GM12878 (cell line): ENCODE measurements at regions of chr19 and their contacts with region 1.

Region 1: DNA sequence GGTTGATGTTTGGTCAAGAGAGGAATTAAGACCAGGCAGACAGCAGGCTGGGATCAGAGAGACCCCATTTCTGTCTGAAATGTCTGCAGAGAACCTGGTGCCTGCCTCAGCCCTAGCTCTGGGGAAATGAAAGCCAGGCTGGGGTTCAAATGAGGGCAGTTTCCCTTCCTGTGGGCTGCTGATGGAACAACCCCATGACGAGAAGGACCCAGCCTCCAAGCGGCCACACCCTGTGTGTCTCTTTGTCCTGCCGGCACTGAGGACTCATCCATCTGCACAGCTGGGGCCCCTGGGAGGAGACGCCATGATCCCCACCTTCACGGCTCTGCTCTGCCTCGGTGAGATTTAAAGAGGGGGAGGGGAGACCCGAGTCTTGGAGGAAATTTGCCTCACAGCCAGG is at the start of gene LILRB4:
- DNase-seq: no peak
- ATAC-seq: peak; percentile 79
- H3K4me3 ChIP-seq: peak within 1 kb of the TSS; percentile 49
- H3K27ac ChIP-seq: peak within 1 kb of the TSS; percentile 57
- H3K4me1 ChIP-seq: peaks cover 34% of the 10 kb centered on the region
- H3K27me3 ChIP-seq: no peaks in the 10 kb centered on the region
- CTCF ChIP-seq: no peak
- EP300 ChIP-seq: no peak
- POLR2A ChIP-seq: no peak; the same call in 1 of the 2 replicates
- RAD21 ChIP-seq: no peak
- polyA plus RNA-seq, gene LILRB4: 2.0 to 4.9 TPM

Region 2: GRCh38 chr19:54573330-54573872 is 89.3 kb before region 1 on chr19 and contains the start of gene LILRA2:
- CTCF ChIA-PET with region 1: no interaction called
- POLR2A ChIA-PET with region 1: no interaction called
- RAD21 ChIA-PET with region 1: no interaction called
- SMC1A ChIA-PET with region 1: no interaction called
- in situ Hi-C with region 1: no loop called
- intact Hi-C with region 1: no loop called
- DNase-seq: no peak
- ATAC-seq: peak; percentile 98
- H3K4me3 ChIP-seq: no peak within 1 kb of the TSS; the same call in 1 of the 2 replicates
- H3K27ac ChIP-seq: no peak within 1 kb of the TSS
- H3K4me1 ChIP-seq: peaks cover 20% of the 10 kb centered on the region
- H3K27me3 ChIP-seq: no peaks in the 10 kb centered on the region; a peak in 1 of 4 replicates
- CTCF ChIP-seq: no peak
- EP300 ChIP-seq: no peak
- POLR2A ChIP-seq: no peak
- RAD21 ChIP-seq: no peak
- polyA plus RNA-seq, gene LILRA2: 0.16 to 0.24 TPM

Region 3: GRCh38 chr19:54622431-54622830 is 40.3 kb before region 1 on chr19:
- CTCF ChIA-PET with region 1: interaction called, 4 read pairs
- POLR2A ChIA-PET with region 1: interaction called, 5 read pairs
- RAD21 ChIA-PET with region 1: interaction called, 14 read pairs
- SMC1A ChIA-PET with region 1: interaction called, 12 read pairs
- in situ Hi-C with region 1: no loop called
- intact Hi-C with region 1: no loop called
- DNase-seq: no peak
- ATAC-seq: peak; percentile 6; the same call in 2 of the 3 replicates
- H3K4me3 ChIP-seq: peak overlapping the region; percentile 82
- H3K27ac ChIP-seq: peak overlapping the region; percentile 67
- H3K4me1 ChIP-seq: peaks cover 3% of the 10 kb centered on the region; the same call in 1 of the 2 replicates
- H3K27me3 ChIP-seq: no peaks in the 10 kb centered on the region
- CTCF ChIP-seq: no peak
- EP300 ChIP-seq: no peak
- POLR2A ChIP-seq: no peak
- RAD21 ChIP-seq: no peak

Region 4: GRCh38 chr19:54694648-54695047 is 31.9 kb after region 1 on chr19:
- CTCF ChIA-PET with region 1: no interaction called
- POLR2A ChIA-PET with region 1: no interaction called
- RAD21 ChIA-PET with region 1: no interaction called
- SMC1A ChIA-PET with region 1: no interaction called
- in situ Hi-C with region 1: no loop called
- intact Hi-C with region 1: no loop called
- DNase-seq: no peak
- ATAC-seq: no peak
- H3K4me3 ChIP-seq: no peak overlapping the region
- H3K27ac ChIP-seq: no peak overlapping the region
- H3K4me1 ChIP-seq: no peaks in the 10 kb centered on the region
- H3K27me3 ChIP-seq: no peaks in the 10 kb centered on the region
- CTCF ChIP-seq: no peak
- EP300 ChIP-seq: no peak
- POLR2A ChIP-seq: no peak
- RAD21 ChIP-seq: no peak

Region 5: GRCh38 chr19:54916822-54917221 is 254.1 kb after region 1 on chr19:
- CTCF ChIA-PET with region 1: no interaction called
- POLR2A ChIA-PET with region 1: no interaction called
- RAD21 ChIA-PET with region 1: no interaction called
- SMC1A ChIA-PET with region 1: no interaction called
- in situ Hi-C with region 1: no loop called
- intact Hi-C with region 1: loop called (anchors 5 kb)
- DNase-seq: peak; percentile 51
- ATAC-seq: peak; percentile 58
- H3K4me3 ChIP-seq: no peak overlapping the region
- H3K27ac ChIP-seq: no peak overlapping the region
- H3K4me1 ChIP-seq: peaks cover 10% of the 10 kb centered on the region
- H3K27me3 ChIP-seq: no peaks in the 10 kb centered on the region
- CTCF ChIP-seq: no peak
- EP300 ChIP-seq: no peak
- POLR2A ChIP-seq: no peak
- RAD21 ChIP-seq: no peak